ENCODE measurements at regions of chr18 and their contacts with region 1.

Region 1: DNA sequence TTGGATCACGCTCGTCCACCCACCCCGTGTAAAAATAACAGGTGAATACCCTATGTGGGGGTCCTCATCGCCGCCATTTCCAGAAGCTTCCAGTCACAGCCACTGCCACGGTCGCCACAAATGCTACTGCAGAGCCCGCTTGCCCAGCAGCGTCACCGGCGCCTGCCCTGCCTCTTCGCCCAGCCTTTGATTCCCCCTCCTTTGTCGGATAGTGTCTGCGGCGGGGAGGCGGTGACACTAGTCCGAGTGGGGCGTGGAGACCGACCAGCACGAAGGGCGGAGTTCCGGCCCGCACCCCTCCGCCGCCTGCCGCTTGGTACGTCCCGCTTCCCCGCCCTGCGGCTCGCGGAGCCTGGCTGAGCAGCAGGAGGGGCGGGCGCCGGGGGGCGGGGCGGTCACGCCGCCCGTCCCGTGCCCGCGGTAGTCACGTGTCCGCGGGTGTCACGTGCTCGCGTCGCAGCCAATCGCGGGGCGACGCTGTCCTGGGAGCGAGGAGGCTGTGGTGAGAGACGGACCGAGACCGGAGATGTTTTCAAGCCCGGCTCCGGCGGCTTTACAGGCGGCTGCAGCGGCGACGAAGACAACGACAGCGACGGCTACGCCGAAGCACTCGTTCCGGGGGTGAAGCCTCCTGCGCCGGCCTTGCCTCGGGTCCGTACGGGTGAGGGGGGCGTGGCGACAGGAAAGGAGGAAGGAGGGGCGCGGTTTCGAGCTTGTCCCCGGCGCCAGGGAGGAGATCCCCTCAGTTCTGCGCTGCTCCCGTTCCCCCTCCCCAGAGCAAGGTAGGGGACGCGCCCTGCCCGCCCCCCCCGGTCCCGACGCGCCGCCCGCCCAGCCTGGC is at the start of gene ANKRD12:
- DNase-seq: peak; percentile 91 to 99 (median 98)

Region 2: DNA sequence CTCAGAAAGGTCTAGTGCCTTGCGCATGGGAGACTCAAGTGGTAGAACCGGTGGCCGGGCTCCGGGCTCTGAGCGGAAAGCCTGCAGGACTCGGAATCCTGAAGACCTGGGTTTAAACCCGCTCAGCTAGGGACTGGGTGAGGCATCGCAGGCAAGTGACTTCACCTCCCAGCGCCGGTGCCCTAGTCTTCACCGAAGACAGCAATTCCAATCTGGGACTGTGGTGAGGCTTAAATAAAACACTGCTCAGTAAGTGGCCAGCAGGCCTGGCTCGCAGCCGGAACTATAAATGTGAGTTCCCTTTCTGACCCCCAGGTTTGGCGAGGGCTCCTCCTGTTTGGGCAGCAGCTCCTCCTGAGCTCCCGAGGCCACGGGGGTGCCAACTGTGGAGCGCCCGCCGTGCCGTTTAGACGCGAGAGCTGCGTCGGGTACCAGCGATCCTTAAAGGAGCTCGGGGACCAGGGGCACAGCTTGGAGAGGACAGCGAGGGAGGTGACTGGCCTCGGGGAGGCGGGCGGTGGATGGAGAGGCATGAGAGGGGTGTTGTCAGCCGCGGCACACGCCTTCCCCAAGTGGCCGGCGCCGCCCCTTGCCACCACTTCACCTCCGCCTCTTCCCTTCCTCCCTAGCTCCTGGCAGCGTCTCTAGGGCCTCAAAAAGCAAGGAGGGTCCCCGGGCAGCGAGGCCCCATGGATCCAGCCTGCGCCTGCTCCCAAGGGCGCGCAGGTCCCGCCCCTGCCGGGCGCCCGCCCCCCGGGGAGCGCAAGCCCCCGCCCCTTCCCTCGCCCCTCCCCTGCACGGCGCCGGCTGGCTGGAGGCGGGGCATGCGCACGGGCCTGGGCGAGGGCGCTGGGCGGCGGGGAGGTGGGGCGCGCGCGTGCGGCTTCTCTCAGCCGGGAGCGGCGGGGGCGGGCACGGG is 431.9 kb before region 1 on chr18:
- intact Hi-C with region 1: loop called (anchors 10 kb)
- DNase-seq: peak; percentile 50 to 96 (median 91)

Region 3: GRCh38 chr18:9102508-9103375 is 33.8 kb before region 1 on chr18 and contains the start of gene NDUFV2:
- intact Hi-C with region 1: loop called (anchors 1 kb)
- DNase-seq: peak; percentile 84 to 99 (median 97)